ENCODE measurements at regions of chr3 and their contacts with region 1.

Region 1: GRCh38 chr3:182713743-182714517 is 79.4 kb upstream of the ATP11B start:
- DNase-seq: peak in 1 of 35 experiments; percentile 61
- ATAC-seq: peak in 2 of 4 experiments; percentile 48 to 60
- H3K4me3 ChIP-seq: no peak overlapping the region
- H3K4me3 Mint-ChIP-seq: no peak overlapping the region
- H3K27ac ChIP-seq: no peak overlapping the region
- H3K27ac Mint-ChIP-seq: no peak overlapping the region
- H3K4me1 ChIP-seq: peaks cover 0 to 2% of the 10 kb centered on the region in 2 experiments
- H3K4me1 Mint-ChIP-seq: peaks cover 6 to 8% (median 6%) of the 10 kb centered on the region in 3 donors
- H3K27me3 ChIP-seq: peaks cover 0 to 2% of the 10 kb centered on the region in 2 experiments
- H3K27me3 Mint-ChIP-seq: peaks cover 0 to 4% of the 10 kb centered on the region in 2 donors

Region 2: DNA sequence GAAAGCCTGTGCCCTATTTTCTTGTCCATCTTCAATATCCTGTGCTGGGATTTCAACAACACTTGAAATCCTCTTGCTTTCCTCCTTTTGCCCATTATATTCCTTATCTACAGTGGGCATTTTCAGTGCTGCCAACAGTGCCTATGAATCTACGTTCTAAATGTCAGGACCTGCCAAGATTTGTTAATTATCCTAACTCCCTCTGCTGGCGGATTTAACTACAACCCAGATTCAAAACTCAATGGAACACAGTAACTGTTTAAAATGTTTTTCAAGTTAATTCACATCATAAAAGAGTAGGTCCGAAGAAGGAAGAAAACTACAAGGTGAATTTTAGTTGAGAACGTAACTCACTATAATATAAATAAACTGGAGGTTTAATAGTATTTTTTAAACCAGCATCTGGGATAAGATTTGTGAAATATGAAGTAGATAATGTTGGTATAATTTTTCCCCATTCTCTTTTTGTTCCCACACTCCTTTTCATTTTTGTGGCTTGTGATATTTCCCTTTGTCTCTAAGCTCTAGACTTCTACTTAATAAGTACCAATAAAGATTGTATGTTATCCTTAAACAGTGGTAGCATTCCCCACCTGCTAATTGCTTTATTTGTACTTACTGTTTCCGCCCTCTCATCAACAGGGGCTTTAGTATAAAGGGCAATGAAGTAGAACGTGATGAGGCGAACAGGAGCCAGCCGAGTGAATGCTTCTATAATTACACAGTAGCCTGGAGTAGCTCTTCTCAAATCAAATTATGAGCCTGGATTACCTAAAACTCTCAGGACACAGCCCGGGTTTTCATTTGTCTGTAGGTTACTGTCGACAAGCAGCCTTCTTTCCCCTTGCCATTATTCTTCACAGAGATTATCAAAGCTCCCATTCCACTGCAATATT is 223.1 kb before region 1 on chr3:
- CTCF ChIA-PET with region 1: no interaction called
- POLR2A ChIA-PET with region 1: no interaction called
- DNase-seq: no peak
- ATAC-seq: no peak
- H3K4me3 ChIP-seq: no peak overlapping the region
- H3K4me3 Mint-ChIP-seq: no peak overlapping the region
- H3K27ac ChIP-seq: no peak overlapping the region
- H3K27ac Mint-ChIP-seq: no peak overlapping the region
- H3K4me1 ChIP-seq: no peaks in the 10 kb centered on the region
- H3K4me1 Mint-ChIP-seq: no peaks in the 10 kb centered on the region
- H3K27me3 ChIP-seq: no peaks in the 10 kb centered on the region
- H3K27me3 Mint-ChIP-seq: no peaks in the 10 kb centered on the region

Region 3: DNA sequence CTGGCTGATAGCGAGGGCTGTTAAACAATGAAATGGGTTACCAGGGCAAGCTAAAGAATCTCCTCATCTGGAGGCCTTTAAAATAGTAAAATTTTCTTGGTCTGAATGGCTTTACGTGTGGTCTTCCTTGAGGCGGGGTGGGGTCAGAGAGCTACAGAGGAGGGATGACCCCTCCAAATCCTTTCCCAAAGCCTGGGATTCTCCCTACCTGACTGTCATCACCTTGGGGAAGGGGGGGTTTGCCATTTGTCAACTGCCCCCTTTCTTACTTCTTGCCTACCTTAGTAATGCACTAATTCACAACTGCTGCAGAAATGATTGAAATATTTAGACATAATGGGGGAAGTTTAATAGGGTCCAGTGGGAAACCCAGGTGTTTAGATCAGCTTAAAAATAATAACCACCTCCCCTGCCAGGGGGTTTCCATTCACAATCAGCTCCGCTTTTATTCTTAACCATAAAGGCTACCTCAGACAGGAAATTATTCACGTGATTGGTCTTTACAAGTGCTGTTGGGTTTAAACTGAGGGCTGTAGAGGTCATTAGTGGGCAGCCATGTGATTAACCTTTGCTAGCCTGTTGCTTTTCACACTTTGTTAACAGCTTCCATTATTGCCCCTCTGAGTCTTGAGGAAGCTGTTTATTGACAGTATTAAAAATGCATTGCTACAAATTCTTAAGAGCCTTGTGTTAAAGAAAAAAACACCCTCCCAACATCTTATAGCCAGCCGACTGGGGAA is 197.2 kb before region 1 on chr3:
- CTCF ChIA-PET with region 1: no interaction called
- POLR2A ChIA-PET with region 1: no interaction called
- DNase-seq: no peak
- ATAC-seq: no peak
- H3K4me3 ChIP-seq: no peak overlapping the region
- H3K4me3 Mint-ChIP-seq: no peak overlapping the region
- H3K27ac ChIP-seq: no peak overlapping the region
- H3K27ac Mint-ChIP-seq: no peak overlapping the region
- H3K4me1 ChIP-seq: no peaks in the 10 kb centered on the region
- H3K4me1 Mint-ChIP-seq: no peaks in the 10 kb centered on the region
- H3K27me3 ChIP-seq: no peaks in the 10 kb centered on the region
- H3K27me3 Mint-ChIP-seq: no peaks in the 10 kb centered on the region

Region 4: GRCh38 chr3:182686033-182686886 is 27.7 kb before region 1 on chr3:
- CTCF ChIA-PET with region 1: interaction called in 1 of 2 experiments, 12 read pairs
- POLR2A ChIA-PET with region 1: no interaction called
- DNase-seq: no peak
- ATAC-seq: no peak
- H3K4me3 ChIP-seq: no peak overlapping the region
- H3K4me3 Mint-ChIP-seq: no peak overlapping the region
- H3K27ac ChIP-seq: no peak overlapping the region
- H3K27ac Mint-ChIP-seq: no peak overlapping the region
- H3K4me1 ChIP-seq: peaks cover 3 to 11% of the 10 kb centered on the region in 2 experiments
- H3K4me1 Mint-ChIP-seq: peaks cover 10 to 14% (median 11%) of the 10 kb centered on the region in 3 donors
- H3K27me3 ChIP-seq: peaks cover 6 to 34% of the 10 kb centered on the region in 2 experiments
- H3K27me3 Mint-ChIP-seq: peaks cover 39 to 61% of the 10 kb centered on the region in 2 donors

Region 5: DNA sequence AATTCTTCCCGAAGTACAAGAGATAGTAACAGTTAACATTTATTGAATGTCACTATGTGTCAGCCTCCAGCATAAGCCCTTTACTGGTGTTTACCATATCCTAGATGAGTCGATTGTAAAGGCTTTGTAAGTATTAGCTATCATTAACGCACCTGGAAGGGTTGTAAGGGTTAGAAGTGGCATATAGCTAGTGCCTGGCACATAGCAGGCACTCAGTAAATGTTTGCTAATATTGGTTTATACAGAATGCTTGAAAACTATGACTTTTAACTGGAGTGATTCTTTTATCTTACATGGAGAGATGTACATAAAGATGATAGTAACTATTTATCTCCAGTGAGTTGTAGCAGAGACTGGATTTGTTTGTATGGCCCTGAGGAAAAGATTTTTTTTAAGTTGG is 33.0 kb after region 1 on chr3:
- CTCF ChIA-PET with region 1: no interaction called
- POLR2A ChIA-PET with region 1: no interaction called
- DNase-seq: no peak
- ATAC-seq: no peak
- H3K4me3 ChIP-seq: no peak overlapping the region
- H3K4me3 Mint-ChIP-seq: no peak overlapping the region
- H3K27ac ChIP-seq: no peak overlapping the region
- H3K27ac Mint-ChIP-seq: no peak overlapping the region
- H3K4me1 ChIP-seq: no peaks in the 10 kb centered on the region
- H3K4me1 Mint-ChIP-seq: no peaks in the 10 kb centered on the region
- H3K27me3 ChIP-seq: peaks cover 0 to 5% of the 10 kb centered on the region in 2 experiments
- H3K27me3 Mint-ChIP-seq: peaks cover 3 to 4% of the 10 kb centered on the region in 2 donors

Region 6: DNA sequence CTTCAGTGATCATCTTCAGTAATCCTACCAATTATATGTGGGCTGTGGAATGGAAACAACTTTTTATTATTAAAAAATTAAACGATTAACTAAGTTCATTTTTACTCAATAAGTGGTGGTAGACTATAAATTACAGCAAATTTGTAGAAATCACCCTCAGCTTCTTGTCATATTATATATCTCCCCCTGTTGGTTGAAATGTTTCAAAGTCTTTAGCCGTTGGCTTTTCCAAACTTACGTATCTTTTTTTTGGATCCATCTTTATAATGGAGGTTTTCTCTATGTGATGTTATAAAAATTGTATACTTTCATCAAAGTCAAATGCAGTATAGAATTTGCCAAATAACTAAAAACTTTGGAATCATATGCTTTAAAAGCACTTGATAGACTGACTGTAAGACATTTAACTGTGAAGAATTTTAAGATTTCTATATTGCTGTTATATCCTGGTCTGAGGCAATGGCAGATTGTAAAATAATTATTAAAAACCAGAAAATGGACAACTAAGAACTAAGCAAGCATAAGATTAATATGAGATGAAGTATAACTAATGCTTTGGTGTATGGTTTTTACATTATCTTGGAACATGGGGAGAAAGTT is 124.0 kb after region 1 on chr3:
- CTCF ChIA-PET with region 1: interaction called, 18 to 71 read pairs
- POLR2A ChIA-PET with region 1: interaction called in 1 of 2 experiments, 5 read pairs
- DNase-seq: peak in 1 of 35 experiments; percentile 46
- ATAC-seq: no peak
- H3K4me3 ChIP-seq: no peak overlapping the region
- H3K4me3 Mint-ChIP-seq: no peak overlapping the region
- H3K27ac ChIP-seq: no peak overlapping the region
- H3K27ac Mint-ChIP-seq: no peak overlapping the region
- H3K4me1 ChIP-seq: no peaks in the 10 kb centered on the region
- H3K4me1 Mint-ChIP-seq: peaks cover 3 to 7% (median 6%) of the 10 kb centered on the region in 3 donors
- H3K27me3 ChIP-seq: no peaks in the 10 kb centered on the region
- H3K27me3 Mint-ChIP-seq: no peaks in the 10 kb centered on the region